ENCODE measurements at regions of chr11 and their contacts with region 1.

Region 1: DNA sequence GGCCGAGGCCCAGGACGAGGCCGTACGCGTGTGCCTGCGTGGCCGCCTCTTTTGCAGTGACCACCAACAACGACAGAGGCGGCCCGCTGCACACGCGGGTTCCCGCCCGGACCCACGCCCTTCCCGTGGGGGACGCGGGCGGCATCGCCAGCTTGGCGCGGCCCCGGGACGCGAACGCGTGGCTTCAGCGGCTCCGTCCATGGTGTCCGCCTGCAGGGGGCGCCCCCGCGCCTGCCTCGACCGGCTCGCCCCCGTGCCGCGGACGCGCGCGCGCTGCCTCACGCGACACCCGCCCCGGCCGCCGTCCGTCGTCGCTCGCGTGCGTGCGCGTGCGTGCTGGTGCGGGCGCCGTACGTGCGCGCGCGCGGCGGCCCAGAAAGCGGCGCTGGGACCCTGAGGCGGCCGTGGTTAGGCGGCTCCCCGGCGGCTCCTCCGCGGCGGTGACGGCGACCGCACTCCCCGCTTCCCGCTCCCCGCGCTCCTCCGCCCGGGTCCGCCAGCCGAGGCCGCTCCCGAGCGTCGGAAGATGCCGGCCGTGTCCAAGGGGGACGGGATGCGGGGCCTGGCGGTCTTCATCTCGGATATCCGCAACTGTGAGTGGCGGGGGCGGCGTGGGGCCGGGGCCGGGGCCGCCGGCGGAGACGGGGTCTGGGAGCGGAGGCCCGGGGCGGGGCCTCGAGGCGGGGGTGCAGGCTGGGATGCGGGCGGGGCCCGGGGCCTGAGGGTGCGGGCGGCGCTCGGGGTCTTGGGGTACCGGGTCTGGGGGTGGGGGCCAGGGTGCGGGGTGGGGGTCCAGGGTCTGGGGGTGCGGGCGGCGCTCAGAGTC is at the start of gene AP2A2:
- DNase-seq: peak; percentile 96
- ATAC-seq: peak; percentile 90
- total RNA-seq, gene AP2A2: 51.7 TPM

Region 2: DNA sequence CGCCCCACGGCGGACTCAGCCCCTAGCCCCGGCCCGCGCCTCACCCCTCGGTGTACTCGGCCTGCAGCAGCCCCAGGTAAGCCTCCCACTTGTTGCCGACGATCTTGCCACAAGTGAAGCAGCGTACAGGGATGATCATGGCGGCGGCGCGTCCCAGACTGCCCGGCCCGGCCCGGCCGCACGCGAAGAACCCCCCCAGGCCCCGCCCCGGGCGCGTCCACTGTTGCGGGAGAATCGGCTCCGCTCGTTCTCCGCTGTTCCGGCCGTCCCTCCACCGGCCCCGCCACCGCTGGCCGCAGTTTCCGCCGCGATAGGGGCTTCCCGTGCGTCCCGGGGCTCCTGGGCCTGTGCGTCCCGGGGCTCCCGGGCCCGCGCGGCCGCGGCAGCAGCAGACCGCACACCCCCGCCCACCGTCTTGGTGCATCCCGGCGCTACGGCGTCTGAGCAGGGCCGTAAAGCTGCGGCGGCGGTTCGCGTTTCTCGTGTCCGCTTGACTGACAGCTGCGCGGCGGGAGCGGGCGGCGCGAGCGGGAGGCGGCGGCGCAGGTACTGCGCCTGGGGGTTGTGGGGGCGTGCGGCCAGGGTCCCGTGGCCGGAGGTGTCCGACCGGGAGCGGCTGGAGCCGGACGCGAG is 83.2 kb before region 1 on chr11 and contains the starts of genes POLR2L and TSPAN4:
- intact Hi-C with region 1: loop called (anchors 5 kb)
- DNase-seq: peak; percentile 96
- ATAC-seq: peak; percentile 50
- total RNA-seq, gene POLR2L: 298 TPM
- total RNA-seq, gene TSPAN4: 43.8 TPM

Region 3: DNA sequence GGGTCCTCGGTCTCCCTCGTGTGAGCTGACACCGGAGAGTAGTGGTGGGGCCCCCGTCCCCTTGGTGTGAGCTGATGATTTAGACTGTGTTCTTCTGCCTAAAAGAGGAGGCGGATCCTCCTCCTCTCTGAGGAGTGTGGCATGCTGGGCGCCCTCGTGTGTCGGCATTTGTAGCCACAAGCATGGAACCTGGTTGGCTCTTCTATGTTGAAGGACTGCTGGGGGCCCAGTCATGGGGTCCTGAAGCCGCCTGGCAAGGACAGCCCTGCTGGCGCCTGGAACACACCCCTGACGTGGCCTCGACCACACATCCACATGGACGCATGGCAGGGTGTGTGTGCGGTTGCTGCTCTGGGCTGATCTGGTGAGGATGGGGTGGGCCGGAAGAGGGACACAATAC is 50.1 kb after region 1 on chr11:
- intact Hi-C with region 1: loop called (anchors 5 kb)
- DNase-seq: peak; percentile 55
- ATAC-seq: no peak

Region 4: DNA sequence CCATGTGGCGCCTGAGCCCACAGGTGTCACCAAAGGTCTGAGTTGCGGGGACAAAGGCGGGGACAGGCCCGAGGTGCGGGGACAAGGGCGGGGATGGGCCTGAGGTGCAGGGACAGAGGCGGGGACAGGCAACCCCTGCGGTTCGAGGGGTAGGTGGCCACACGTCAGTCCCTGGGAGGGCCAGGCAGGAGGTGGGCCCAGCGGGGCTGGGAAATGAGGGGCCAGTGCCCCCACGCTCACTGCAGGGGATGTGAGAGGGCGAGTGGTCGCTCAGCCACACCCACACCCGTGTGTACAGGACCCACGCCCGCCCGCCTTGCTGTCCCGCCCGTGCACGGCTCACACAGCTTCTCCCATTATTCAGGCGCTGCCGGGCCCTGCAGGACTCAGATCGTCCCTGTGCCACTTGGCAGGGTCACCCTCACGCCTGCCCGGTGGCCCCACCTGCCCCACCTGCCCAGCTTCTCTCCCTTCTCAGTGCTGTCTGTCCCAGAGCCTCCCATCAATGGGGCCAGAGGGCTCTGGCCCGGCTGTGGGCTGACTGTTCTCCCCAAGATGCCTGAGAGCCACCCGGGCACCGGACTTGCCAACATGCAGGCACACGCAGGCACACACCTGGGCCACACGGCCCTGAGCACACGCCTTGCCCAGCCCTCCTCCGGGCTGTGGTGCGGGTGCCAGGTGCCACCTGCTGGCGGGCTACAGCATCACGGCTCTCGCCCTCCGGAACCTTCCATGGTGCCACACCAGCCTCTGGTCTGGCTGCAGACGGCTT is 125.1 kb after region 1 on chr11:
- intact Hi-C with region 1: loop called (anchors 5 kb)
- DNase-seq: peak; percentile 78
- ATAC-seq: peak; percentile 85